Pancreas (tissue), 10 donors: ENCODE measurements at regions of chr17 and their contacts with region 1.

Region 1: DNA sequence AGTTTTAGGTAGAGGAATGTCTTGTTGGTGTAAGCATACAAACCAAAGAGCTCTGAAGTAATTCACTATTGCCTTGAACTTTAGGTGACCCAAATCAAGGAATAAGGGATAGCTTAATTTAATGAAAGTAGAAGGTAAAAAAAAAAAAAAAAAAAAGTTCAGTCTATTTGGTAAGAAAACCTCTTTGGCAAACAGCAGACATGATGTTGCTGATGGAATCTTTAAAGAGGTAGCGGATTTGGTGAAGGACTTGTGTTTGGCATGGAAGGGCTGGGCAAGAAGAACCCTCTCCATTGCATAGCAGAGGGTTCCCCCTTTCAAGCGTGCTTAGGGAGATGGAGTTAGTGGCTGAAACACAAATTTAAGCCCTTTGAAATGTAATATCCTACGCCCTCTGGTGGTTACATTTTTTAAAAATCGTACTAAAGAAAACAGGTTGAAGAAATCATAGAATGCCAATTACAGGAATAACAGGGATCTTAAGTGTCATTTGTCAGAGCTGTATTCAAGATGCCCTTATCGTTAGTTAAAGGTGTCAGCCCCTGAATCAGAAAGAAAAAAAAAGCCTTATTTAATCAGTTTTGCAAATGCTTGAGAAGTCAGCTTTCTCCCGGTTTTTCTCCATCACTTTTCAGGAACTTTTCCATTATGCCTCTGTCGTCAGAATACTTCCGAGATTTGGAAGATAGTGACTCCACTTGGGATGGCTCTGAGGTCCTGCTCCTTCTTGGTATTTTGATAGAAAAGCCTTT is 383.1 kb downstream of the KCNJ2 start:
- DNase-seq: no peak
- ATAC-seq: peak in 3 of 4 donors; percentile 60 to 77 (median 69)
- H3K4me3 ChIP-seq: no peak overlapping the region
- H3K27ac ChIP-seq: no peak overlapping the region
- H3K4me1 ChIP-seq: no peaks in the 10 kb centered on the region
- H3K27me3 ChIP-seq: no peaks in the 10 kb centered on the region
- CTCF ChIP-seq: peak; percentile 9 to 49 (median 31)

Region 2: DNA sequence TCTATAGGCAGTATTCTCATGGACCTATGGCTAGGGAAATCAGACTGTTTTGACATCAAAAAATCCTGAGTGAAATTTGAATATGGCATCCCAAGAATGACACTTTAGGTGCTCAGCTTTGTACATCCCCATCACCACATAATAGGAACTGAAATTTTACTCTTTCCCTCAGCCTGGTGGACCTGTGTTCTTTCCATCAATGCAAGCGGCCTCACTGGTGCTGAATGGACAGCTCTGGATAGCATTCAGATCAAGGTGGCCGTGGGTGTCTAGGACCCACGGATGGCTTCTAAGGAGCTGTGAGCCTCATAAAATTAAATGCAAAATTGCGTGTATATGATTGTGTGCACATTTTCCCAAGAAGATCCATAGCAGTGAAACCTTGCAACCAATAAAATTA is 985.3 kb before region 1 on chr17:
- intact Hi-C with region 1: loop called in 1 of 3 experiments (anchors 5 kb)
- DNase-seq: no peak
- ATAC-seq: no peak
- H3K4me3 ChIP-seq: no peak overlapping the region
- H3K27ac ChIP-seq: no peak overlapping the region
- H3K4me1 ChIP-seq: no peaks in the 10 kb centered on the region
- H3K27me3 ChIP-seq: no peaks in the 10 kb centered on the region
- CTCF ChIP-seq: no peak

Region 3: DNA sequence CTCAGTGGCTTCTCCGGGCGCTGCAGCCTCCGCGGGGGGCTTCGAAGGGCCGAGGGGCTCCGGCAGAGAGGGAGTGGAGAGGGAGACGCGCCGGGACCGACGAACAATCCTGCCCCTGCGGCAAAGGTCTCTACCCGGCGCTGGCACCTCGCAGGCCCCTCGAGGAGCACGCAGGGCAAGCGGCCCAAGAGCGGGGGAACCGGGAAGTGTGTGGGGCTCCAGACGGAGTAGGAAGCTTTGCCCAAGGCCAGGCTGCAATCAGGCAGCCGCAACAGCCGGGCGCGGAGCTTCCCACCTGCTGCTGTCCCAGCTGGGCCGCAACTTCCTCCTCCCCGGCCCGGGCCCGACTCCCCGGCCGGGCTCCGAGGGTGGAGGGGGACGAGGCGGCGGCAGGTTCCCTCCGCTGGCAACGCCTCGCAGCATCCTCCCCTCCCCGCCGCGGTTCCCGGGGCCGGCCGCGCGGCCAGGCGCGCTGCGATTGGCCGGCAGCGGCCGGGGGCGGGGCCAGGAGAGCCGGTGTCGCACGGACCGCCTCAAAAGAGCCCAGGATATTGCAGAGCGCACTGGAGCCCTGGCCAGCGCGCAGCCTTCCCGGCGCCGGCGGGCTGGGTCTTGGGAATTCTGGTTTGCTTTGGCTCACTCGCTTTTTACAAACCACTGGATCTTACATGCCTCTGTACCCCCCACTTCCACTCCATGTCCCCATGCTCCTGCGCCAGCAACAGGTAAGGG is 383.3 kb before region 1 on chr17 and contains the start of gene KCNJ2:
- intact Hi-C with region 1: loop called in 1 of 3 experiments (anchors 10 kb)
- DNase-seq: peak; percentile 84 to 96 (median 91)
- ATAC-seq: peak; percentile 88 to 96 (median 95)
- H3K4me3 ChIP-seq: peak within 1 kb of the TSS; percentile 49 to 66 (median 60)
- H3K27ac ChIP-seq: peak within 1 kb of the TSS; percentile 60 to 87 (median 78)
- H3K4me1 ChIP-seq: peaks cover 0 to 5% (median 3%) of the 10 kb centered on the region in 3 donors
- H3K27me3 ChIP-seq: no peaks in the 10 kb centered on the region
- CTCF ChIP-seq: no peak
- total RNA-seq, gene KCNJ2: 0.32 to 2.3 (median 0.60) TPM